Dendritic cell treated with granulocyte-macrophage colony-stimulating factor and Interleukin-4, amounts not matched to agents 40 ng/mL and 50 ng/mL, for 4 days (primary cell): ENCODE measurements at regions of chr1 and their contacts with region 1.

Region 1: DNA sequence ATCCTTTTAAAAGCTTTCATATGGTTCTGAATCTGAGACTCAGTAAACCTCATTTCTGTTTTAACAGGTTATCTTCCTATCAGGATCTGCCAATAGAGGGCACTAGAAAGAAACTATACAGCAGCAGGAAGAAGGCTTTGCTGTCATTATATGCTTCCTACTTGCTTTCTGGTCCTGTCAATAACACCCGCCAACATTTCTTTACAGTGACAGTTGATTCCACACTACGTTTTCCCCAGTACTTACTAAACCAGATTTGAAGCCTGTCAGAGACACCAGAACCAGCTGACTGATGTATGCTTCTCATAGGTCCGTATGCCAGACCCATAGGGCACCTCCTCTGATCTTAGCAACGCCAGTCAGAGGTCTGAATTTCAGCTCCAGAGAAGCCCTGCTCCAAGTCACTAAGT is 341.0 kb upstream of the NEGR1 start:
- H3K4me3 Mint-ChIP-seq: peak overlapping the region; percentile 70
- H3K27ac Mint-ChIP-seq: peak overlapping the region; percentile 61
- H3K4me1 Mint-ChIP-seq: no peaks in the 10 kb centered on the region
- H3K27me3 Mint-ChIP-seq: no peaks in the 10 kb centered on the region

Region 2: DNA sequence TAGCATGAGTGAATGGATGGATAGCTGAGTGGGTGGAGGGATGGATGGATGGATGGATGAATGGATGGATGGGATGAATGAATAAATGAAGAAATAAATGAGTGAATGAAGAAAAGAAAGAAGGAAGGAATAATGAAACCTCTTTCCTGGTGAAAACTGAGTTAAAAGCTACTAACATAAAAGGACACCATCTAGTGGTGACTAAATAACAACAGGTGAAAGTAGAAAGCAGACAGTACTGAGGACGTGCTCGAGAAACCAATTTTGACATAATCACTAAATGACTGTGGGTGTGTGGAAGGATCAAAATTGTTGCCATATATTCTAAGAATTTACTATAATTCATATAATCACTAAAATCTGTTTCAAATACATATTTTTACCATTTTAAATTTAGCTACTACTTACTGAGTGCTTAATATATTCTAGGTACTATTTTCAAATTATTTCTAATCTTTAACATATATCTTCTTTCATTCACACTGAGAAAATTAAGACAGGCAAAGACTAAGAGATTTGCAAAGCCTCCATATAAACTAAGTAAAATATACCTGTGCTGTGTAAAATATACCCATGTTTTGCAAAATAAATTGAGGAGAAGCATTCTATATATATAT is 1051.7 kb after region 1 on chr1:
- intact Hi-C with region 1: loop called (anchors 5 kb)
- H3K4me3 Mint-ChIP-seq: no peak overlapping the region
- H3K27ac Mint-ChIP-seq: no peak overlapping the region
- H3K4me1 Mint-ChIP-seq: no peaks in the 10 kb centered on the region
- H3K27me3 Mint-ChIP-seq: no peaks in the 10 kb centered on the region

Region 3: GRCh38 chr1:73998348-73998959 is 1375.2 kb after region 1 on chr1:
- intact Hi-C with region 1: loop called (anchors 5 kb)
- H3K4me3 Mint-ChIP-seq: no peak overlapping the region
- H3K27ac Mint-ChIP-seq: no peak overlapping the region
- H3K4me1 Mint-ChIP-seq: no peaks in the 10 kb centered on the region
- H3K27me3 Mint-ChIP-seq: no peaks in the 10 kb centered on the region